ENCODE measurements at regions of chr10 and their contacts with region 1.

Region 1: GRCh38 chr10:123573236-123574108 is 92.7 kb upstream of the GPR26 start:
- DNase-seq: peak; percentile 73 to 92
- H3K4me3 ChIP-seq: no peak overlapping the region
- H3K27ac ChIP-seq: no peak overlapping the region
- H3K4me1 ChIP-seq: peaks cover 0 to 3% (median under 1%) of the 10 kb centered on the region in 4 experiments; a peak in 2 of 7 replicates
- H3K27me3 ChIP-seq: no peaks in the 10 kb centered on the region; a peak in 1 of 7 replicates
- CTCF ChIP-seq: peak; percentile 92 to 99 (median 97)
- EP300 ChIP-seq: no peak
- POLR2A ChIP-seq: no peak
- RAD21 ChIP-seq: peak; percentile 76 to 83

Region 2: GRCh38 chr10:123522702-123523312 is 50.7 kb before region 1 on chr10:
- CTCF ChIA-PET with region 1: no interaction called
- POLR2A ChIA-PET with region 1: no interaction called
- DNase-seq: no peak
- H3K4me3 ChIP-seq: no peak overlapping the region
- H3K27ac ChIP-seq: no peak overlapping the region
- H3K4me1 ChIP-seq: 0 out of 7 replicates have a peak, but pooled peaks cover 0 to 3% (median 0%) of the 10 kb centered on the region in 4 experiments
- H3K27me3 ChIP-seq: no peaks in the 10 kb centered on the region
- CTCF ChIP-seq: no peak
- EP300 ChIP-seq: no peak
- POLR2A ChIP-seq: no peak
- RAD21 ChIP-seq: no peak

Region 3: DNA sequence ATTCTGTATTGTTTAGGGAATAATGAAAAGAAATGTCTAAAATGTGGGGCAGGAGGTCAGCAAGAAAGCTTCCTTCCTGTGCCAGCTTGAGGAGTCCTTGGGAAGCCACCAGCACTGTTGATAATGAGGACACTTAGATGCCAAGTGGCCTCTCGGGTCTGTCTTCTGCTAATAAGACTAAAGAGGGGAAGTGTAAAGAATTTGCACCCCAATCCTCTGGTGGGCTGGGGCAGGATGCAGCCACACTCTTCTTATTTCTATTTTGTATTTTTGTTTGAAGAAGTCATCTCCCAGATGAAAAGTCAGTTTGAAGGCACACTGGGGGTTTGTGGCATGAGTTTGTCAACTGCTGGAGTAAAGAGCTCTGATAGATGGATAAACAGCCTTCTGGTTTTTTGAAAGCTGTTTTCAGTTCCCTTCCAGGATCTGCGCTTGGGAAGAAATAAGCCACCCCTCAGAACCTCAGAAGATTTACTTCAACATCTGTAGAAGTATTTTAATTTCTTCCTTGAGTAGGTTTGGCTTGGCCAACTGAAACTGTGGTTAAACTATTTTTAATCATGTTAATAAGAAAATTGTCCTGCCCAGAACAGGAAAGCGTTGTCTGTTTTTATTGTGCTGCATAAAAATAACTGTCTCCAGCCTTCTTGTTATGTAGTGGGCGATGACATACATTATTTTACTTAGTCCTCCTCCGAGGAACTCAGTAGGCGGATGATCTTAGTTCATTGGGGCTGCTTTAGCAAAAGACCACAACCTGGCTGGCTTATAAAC is 36.1 kb before region 1 on chr10:
- CTCF ChIA-PET with region 1: no interaction called
- POLR2A ChIA-PET with region 1: no interaction called
- DNase-seq: peak in 1 of 2 experiments; percentile 17
- H3K4me3 ChIP-seq: no peak overlapping the region
- H3K27ac ChIP-seq: no peak overlapping the region
- H3K4me1 ChIP-seq: peaks cover 0 to 8% (median 4%) of the 10 kb centered on the region in 4 experiments; a peak in 3 of 7 replicates
- H3K27me3 ChIP-seq: no peaks in the 10 kb centered on the region
- CTCF ChIP-seq: no peak
- EP300 ChIP-seq: no peak
- POLR2A ChIP-seq: no peak
- RAD21 ChIP-seq: no peak

Region 4: GRCh38 chr10:123552760-123553554 is 20.5 kb before region 1 on chr10:
- CTCF ChIA-PET with region 1: interaction called, 13 read pairs
- POLR2A ChIA-PET with region 1: no interaction called
- DNase-seq: peak in 1 of 2 experiments; percentile 31
- H3K4me3 ChIP-seq: no peak overlapping the region
- H3K27ac ChIP-seq: no peak overlapping the region
- H3K4me1 ChIP-seq: peaks cover 0 to 4% (median 2%) of the 10 kb centered on the region in 4 experiments; a peak in 2 of 7 replicates
- H3K27me3 ChIP-seq: no peaks in the 10 kb centered on the region; a peak in 1 of 7 replicates
- CTCF ChIP-seq: no peak
- EP300 ChIP-seq: no peak
- POLR2A ChIP-seq: no peak
- RAD21 ChIP-seq: no peak

Region 5: GRCh38 chr10:123655751-123656150 is 82.3 kb after region 1 on chr10:
- CTCF ChIA-PET with region 1: interaction called, 401 read pairs
- POLR2A ChIA-PET with region 1: no interaction called
- DNase-seq: peak in 1 of 2 experiments; percentile 71
- H3K4me3 ChIP-seq: no peak overlapping the region
- H3K27ac ChIP-seq: no peak overlapping the region
- H3K4me1 ChIP-seq: peaks cover 0 to 4% (median 3%) of the 10 kb centered on the region in 4 experiments; a peak in 5 of 7 replicates
- H3K27me3 ChIP-seq: no peaks in the 10 kb centered on the region; a peak in 1 of 7 replicates
- CTCF ChIP-seq: peak; percentile 63 to 81 (median 72)
- EP300 ChIP-seq: no peak
- POLR2A ChIP-seq: no peak
- RAD21 ChIP-seq: peak; percentile 83 to 92

Region 6: DNA sequence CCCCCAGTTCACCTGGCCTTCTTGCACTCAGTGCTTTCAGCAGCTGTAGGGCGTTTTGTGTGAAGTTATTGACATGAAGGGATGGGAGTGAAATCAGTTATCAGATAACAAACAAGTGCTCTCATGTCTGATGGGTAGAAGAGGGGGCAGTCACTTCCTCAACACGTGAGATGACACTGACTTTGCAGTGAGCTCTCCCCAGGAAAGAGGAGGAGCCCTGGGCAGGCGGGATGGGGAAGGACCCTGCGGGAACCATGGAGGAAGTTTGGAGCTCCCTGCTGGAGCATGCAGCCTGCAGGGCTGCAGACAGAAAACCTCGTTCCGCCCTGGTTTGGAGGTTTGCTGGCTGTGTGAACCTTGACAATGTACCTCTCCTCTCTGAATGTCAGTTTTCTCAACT is 131.3 kb after region 1 on chr10:
- CTCF ChIA-PET with region 1: interaction called, 12 read pairs
- POLR2A ChIA-PET with region 1: no interaction called
- DNase-seq: no peak
- H3K4me3 ChIP-seq: no peak overlapping the region
- H3K27ac ChIP-seq: no peak overlapping the region
- H3K4me1 ChIP-seq: no peaks in the 10 kb centered on the region; a peak in 1 of 7 replicates
- H3K27me3 ChIP-seq: no peaks in the 10 kb centered on the region; a peak in 1 of 7 replicates
- CTCF ChIP-seq: no peak
- EP300 ChIP-seq: no peak
- POLR2A ChIP-seq: no peak
- RAD21 ChIP-seq: no peak

Region 7: DNA sequence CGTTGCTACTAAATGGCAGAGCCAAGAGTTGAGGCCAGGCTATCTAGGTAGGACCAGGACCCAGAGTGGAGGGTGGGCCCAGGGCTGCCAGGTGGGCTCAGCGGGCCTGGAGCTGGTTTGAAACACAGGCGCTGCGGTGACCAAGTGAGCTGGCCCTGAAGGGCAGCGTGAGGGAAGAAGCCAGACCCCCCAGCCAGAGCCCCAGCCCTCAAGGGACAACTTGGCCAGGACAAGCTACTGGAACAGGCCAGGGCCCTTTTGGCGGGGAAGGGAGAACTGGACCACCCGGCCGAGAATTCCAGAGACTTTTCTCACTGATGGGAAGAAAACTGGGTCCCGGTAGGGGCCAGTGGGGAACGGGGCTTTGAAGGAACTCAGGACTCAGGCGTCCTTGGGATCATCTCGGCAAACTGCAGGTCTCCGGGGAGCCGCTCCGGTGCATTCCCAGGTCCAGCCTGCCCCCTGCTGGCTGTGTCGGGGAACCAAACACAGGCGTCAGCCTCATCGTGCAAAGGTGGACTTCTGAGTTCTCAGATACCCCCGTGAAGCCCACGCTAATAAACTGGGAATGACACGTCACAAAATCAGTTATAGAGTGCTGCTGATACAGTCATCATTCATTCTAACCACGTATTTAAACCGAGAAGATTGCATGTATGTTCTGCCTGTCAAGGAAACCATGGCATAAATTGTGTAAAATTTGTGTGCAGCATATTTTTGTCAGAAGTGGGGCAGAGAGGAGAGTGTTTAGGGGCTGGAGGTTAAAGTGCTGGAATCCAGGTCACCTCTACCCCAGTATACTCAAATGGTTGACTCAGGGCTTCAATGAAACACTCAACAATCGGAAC is 394.1 kb after region 1 on chr10:
- CTCF ChIA-PET with region 1: interaction called, 10 read pairs
- POLR2A ChIA-PET with region 1: no interaction called
- DNase-seq: peak; percentile 63 to 95
- H3K4me3 ChIP-seq: no peak overlapping the region
- H3K27ac ChIP-seq: no peak overlapping the region
- H3K4me1 ChIP-seq: peaks cover 2 to 20% (median 8%) of the 10 kb centered on the region in 4 experiments
- H3K27me3 ChIP-seq: peaks cover 0 to 8% (median 5%) of the 10 kb centered on the region in 4 experiments; a peak in 3 of 7 replicates
- CTCF ChIP-seq: peak; percentile 89 to 95 (median 91)
- EP300 ChIP-seq: no peak
- POLR2A ChIP-seq: no peak
- RAD21 ChIP-seq: peak; percentile 99